Activated B cell treated with CpG ODN at 0.5 μM for 24 hours (primary cell): ENCODE measurements at regions of chr7 and their contacts with region 1.

Region 1: GRCh38 chr7:156725077-156725476 is 84.5 kb downstream of the RNF32 start:
- DNase-seq: no peak
- ATAC-seq: no peak
- H3K4me3 Mint-ChIP-seq: no peak overlapping the region
- H3K27ac Mint-ChIP-seq: no peak overlapping the region
- H3K4me1 Mint-ChIP-seq: no peaks in the 10 kb centered on the region
- H3K27me3 Mint-ChIP-seq: no peaks in the 10 kb centered on the region
- CTCF ChIP-seq: no peak

Region 2: DNA sequence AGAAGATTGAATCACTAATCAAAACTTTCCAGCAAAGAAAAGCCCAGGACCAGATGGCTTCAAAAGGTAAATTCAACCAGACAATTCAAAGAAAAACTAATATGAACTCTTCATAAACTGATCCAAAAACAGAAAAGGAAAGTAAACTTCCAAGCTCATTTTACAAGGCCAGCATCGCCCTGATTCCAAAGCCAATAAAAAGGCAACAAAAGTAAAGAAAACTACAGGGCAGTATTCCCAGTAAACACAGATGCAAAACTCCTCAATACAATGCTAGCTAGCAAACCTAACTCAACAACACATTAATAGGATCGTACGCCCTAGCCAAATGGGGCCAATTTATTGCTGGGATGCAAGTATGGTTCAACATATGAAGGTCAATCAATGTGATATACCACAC is 31.4 kb before region 1 on chr7:
- CTCF ChIA-PET with region 1: no interaction called
- POLR2A ChIA-PET with region 1: no interaction called
- intact Hi-C with region 1: loop called (anchors 5 kb)
- DNase-seq: no peak
- ATAC-seq: no peak
- H3K4me3 Mint-ChIP-seq: no peak overlapping the region
- H3K27ac Mint-ChIP-seq: no peak overlapping the region
- H3K4me1 Mint-ChIP-seq: no peaks in the 10 kb centered on the region
- H3K27me3 Mint-ChIP-seq: no peaks in the 10 kb centered on the region
- CTCF ChIP-seq: no peak